ENCODE measurements at regions of chr11 and their contacts with region 1.

Region 1: DNA sequence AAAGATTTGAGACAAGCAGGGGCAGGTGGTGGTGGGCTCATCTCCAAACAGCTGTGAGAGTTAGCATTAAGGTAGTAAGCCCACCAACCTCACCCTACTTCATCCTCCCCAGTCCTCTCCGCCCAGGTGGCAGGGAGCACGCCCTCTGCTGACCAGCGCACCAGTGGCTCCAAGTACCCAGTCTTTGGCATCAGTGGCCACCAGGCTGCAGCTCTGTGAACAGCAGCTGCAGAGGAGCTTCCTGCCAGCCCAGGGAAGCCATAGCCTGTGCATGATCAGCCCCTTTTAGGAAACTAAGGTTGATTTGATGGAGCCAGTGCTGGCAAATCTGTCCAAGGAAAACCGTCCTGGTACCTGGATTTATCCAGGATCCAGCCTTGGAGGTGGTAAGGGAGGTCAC is 21.7 kb downstream of the CAVIN3 start:
- DNase-seq: no peak
- ATAC-seq: peak; percentile 99
- H3K4me3 ChIP-seq: no peak overlapping the region
- H3K27ac ChIP-seq: no peak overlapping the region
- H3K4me1 ChIP-seq: no peaks in the 10 kb centered on the region
- H3K27me3 ChIP-seq: peaks cover 10% of the 10 kb centered on the region; the same call in 1 of the 2 replicates
- CTCF ChIP-seq: peak; percentile 98

Region 2: DNA sequence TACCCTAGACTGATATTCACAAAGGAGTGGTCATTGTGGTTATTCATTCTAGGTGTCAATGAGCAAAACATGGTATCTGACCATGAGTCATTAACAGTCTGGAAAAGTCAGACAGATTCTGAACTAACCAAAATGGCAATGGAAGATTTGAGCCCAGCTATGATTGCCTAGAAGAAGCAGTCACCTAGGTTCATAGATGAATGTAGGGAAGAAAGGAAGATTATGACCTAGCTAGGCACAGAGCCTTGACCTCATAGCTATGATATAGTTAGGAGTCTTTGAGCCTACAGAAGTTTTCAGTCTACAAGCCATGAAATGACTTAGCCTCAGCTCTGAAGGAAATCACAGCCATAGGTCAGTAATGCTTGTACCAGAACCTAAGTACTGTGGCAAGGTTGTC is 292.2 kb before region 1 on chr11:
- CTCF ChIA-PET with region 1: no interaction called
- POLR2A ChIA-PET with region 1: no interaction called
- in situ Hi-C with region 1: no loop called
- intact Hi-C with region 1: no loop called
- DNase-seq: no peak
- ATAC-seq: no peak
- H3K4me3 ChIP-seq: no peak overlapping the region
- H3K27ac ChIP-seq: no peak overlapping the region
- H3K4me1 ChIP-seq: no peaks in the 10 kb centered on the region
- H3K27me3 ChIP-seq: peaks cover 17% of the 10 kb centered on the region
- CTCF ChIP-seq: no peak

Region 3: DNA sequence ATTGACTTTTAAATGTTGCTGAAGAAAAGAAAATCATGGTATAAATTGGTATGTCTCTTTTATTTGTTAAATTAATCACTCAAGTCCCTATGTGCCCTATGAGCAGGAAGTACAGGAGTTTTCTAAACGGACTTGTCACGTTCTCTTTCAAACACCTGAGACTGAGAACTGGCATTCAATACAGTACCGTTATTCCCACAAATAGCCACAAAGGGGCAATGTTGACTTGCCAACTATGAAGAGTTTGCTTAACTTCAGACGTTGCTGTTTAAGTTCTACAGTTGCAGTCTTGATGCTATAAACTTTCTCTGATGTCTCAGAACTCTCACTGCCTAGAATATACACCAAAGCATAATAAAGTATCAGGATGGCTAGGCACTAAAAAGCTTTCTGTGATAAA is 275.6 kb before region 1 on chr11:
- CTCF ChIA-PET with region 1: no interaction called
- POLR2A ChIA-PET with region 1: no interaction called
- in situ Hi-C with region 1: no loop called
- intact Hi-C with region 1: loop called (anchors 2 kb)
- DNase-seq: peak; percentile 58
- ATAC-seq: peak; percentile 93
- H3K4me3 ChIP-seq: no peak overlapping the region
- H3K27ac ChIP-seq: no peak overlapping the region
- H3K4me1 ChIP-seq: no peaks in the 10 kb centered on the region
- H3K27me3 ChIP-seq: peaks cover 5% of the 10 kb centered on the region
- CTCF ChIP-seq: peak; percentile 71

Region 4: GRCh38 chr11:6251120-6251733 is 47.4 kb before region 1 on chr11:
- CTCF ChIA-PET with region 1: interaction called, 11 read pairs
- POLR2A ChIA-PET with region 1: no interaction called
- in situ Hi-C with region 1: no loop called
- intact Hi-C with region 1: no loop called
- DNase-seq: peak; percentile 69
- ATAC-seq: peak; percentile 98
- H3K4me3 ChIP-seq: no peak overlapping the region
- H3K27ac ChIP-seq: no peak overlapping the region
- H3K4me1 ChIP-seq: no peaks in the 10 kb centered on the region
- H3K27me3 ChIP-seq: peaks cover 10% of the 10 kb centered on the region
- CTCF ChIP-seq: peak; percentile 96

Region 5: DNA sequence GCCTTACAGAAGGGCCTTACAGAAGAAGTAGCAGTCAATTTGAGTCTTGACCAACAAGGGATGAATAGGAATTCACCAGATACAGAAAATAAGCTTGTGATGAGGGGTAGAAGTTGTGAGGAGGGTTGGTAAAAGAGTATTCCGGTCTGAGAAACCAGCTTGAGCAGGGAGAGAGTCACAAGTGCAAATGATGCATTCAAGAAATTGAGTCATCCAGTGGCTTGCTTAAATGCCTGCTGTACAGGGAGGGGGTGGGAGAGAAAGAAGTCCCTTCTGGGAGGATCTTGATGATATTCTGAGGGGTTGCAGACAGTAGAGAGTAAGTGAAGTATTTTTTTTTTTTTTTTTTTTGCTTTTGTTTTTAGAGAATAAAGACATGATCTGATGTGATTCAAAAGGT is 29.8 kb before region 1 on chr11:
- CTCF ChIA-PET with region 1: interaction called, 4 read pairs
- POLR2A ChIA-PET with region 1: interaction called, 15 read pairs
- in situ Hi-C with region 1: no loop called
- intact Hi-C with region 1: no loop called
- DNase-seq: no peak
- ATAC-seq: no peak
- H3K4me3 ChIP-seq: no peak overlapping the region
- H3K27ac ChIP-seq: no peak overlapping the region
- H3K4me1 ChIP-seq: no peaks in the 10 kb centered on the region
- H3K27me3 ChIP-seq: peaks cover 12% of the 10 kb centered on the region
- CTCF ChIP-seq: no peak

Region 6: DNA sequence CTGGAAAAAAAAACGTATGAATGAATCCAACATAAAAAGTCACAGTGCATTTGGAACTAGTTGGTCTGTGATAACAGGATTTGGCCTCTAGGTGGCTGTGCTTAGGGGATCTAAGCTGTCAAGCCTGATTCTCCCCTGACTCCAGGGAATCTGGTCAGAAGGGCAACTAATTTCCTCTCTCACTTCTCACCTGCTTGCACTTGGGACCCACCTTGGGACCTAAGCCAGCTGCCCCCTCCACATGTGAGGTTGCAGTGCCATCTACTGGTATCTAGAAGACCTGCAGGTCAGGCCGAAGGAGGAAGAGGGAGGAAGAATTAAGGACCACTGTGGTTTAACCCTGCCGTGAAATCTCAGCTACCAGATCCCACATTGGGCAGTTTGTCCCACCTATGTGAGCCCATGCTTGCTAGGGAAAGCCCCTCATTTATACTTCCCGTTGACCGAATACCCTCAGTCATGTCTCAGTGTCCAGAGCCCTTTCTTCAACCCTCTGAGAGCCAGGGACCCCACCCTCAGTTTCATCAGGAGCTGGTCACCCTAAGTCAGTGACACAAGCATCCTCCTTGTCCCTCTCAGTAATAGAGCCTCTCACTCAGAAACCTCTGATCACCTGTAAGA is 54.9 kb after region 1 on chr11:
- CTCF ChIA-PET with region 1: interaction called, 5 read pairs
- POLR2A ChIA-PET with region 1: interaction called, 4 read pairs
- in situ Hi-C with region 1: no loop called
- intact Hi-C with region 1: loop called (anchors 5 kb)
- DNase-seq: peak; percentile 55
- ATAC-seq: peak; percentile 86
- H3K4me3 ChIP-seq: no peak overlapping the region
- H3K27ac ChIP-seq: no peak overlapping the region
- H3K4me1 ChIP-seq: no peaks in the 10 kb centered on the region
- H3K27me3 ChIP-seq: no peaks in the 10 kb centered on the region
- CTCF ChIP-seq: peak; percentile 99

Region 7: GRCh38 chr11:6483015-6483414 is 184.4 kb after region 1 on chr11:
- CTCF ChIA-PET with region 1: no interaction called
- POLR2A ChIA-PET with region 1: interaction called, 16 read pairs
- in situ Hi-C with region 1: no loop called
- intact Hi-C with region 1: no loop called
- DNase-seq: no peak
- ATAC-seq: no peak
- H3K4me3 ChIP-seq: peak overlapping the region in 1 of 2 experiments; percentile 98; a peak in 1 of 4 replicates
- H3K27ac ChIP-seq: no peak overlapping the region
- H3K4me1 ChIP-seq: peaks cover 20% of the 10 kb centered on the region
- H3K27me3 ChIP-seq: no peaks in the 10 kb centered on the region
- CTCF ChIP-seq: no peak

Region 8: DNA sequence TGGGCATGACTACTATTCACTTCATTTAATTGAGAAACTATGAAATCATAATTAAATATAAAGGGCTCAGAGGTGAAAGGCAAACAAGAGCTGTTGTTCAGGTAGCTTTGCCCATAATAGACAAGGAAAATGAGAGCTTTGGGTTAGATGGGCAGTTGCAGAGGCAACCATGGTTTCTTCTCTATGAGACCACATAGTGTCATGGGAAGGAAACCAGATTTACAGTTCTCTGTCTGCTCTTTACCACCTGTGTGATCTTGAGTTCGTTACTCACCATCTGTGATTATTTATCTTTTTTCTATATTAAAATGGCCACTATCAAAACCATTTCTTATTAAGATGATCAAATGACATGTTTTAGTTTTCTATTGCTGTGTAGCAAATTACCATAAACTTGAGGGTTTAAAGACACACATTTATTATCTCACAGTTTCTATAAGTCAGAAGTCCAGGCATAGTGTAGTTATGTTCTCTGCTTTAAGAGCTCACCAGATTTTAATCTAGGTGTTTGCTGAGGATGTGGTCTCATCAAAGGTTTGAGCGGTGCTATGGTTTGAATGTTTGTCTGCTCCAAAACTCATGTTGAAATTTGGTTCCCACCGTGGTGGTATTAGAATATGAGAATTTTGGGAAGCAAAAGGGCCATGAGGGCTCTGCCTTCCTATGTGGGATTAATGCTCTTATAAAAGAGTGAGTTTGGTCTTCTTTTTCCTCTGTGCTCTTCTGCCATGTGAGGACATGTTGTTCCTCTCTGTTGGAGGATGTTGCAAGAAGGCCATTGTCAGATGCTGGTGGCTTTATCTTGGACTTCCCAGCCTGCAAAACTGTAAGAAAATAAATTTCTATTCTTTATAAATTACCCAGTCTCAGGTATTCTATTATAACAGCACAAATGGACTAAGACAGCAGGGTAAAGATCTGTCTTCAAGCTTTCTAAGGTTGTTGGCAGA is 435.0 kb after region 1 on chr11:
- CTCF ChIA-PET with region 1: no interaction called
- POLR2A ChIA-PET with region 1: no interaction called
- in situ Hi-C with region 1: no loop called
- intact Hi-C with region 1: no loop called
- DNase-seq: no peak
- ATAC-seq: no peak
- H3K4me3 ChIP-seq: no peak overlapping the region
- H3K27ac ChIP-seq: no peak overlapping the region
- H3K4me1 ChIP-seq: 0 out of 2 replicates have a peak, but pooled peaks cover 3% of the 10 kb centered on the region
- H3K27me3 ChIP-seq: peaks cover 5% of the 10 kb centered on the region
- CTCF ChIP-seq: no peak